Tibial artery (tissue), 4 donors: ENCODE measurements at regions of chr5 and their contacts with region 1.

Region 1: GRCh38 chr5:84213861-84214260 is 170.8 kb downstream of the EDIL3 start:
- DNase-seq: no peak
- H3K4me3 ChIP-seq: no peak overlapping the region
- H3K27ac ChIP-seq: no peak overlapping the region
- H3K4me1 ChIP-seq: peaks cover 0 to 44% (median 5%) of the 10 kb centered on the region in 4 donors
- H3K27me3 ChIP-seq: no peaks in the 10 kb centered on the region
- CTCF ChIP-seq: no peak

Region 2: DNA sequence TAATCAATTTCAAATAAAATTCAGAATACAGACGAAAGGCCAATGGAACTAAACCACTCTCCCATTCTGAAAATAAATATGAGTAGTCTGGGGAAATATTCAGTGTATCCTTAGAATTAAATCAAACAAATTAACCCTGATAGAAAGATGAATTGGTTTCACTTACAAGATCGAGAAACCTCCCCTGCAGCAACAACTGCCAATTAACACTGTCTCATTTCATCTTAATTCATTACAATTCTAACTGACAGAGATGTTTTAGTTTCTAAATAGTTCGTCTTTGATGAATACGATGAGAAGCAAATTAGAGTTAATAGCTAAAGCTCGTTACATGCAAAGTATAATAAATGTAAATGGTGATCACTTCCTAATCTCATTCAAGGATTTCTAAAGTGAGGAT is 76.3 kb before region 1 on chr5:
- intact Hi-C with region 1: loop called (anchors 2 kb)
- DNase-seq: no peak
- H3K4me3 ChIP-seq: no peak overlapping the region
- H3K27ac ChIP-seq: no peak overlapping the region
- H3K4me1 ChIP-seq: no peaks in the 10 kb centered on the region
- H3K27me3 ChIP-seq: no peaks in the 10 kb centered on the region
- CTCF ChIP-seq: no peak